Endothelial cell of umbilical vein (primary cell): ENCODE measurements at regions of chr11 and their contacts with region 1.

Region 1: DNA sequence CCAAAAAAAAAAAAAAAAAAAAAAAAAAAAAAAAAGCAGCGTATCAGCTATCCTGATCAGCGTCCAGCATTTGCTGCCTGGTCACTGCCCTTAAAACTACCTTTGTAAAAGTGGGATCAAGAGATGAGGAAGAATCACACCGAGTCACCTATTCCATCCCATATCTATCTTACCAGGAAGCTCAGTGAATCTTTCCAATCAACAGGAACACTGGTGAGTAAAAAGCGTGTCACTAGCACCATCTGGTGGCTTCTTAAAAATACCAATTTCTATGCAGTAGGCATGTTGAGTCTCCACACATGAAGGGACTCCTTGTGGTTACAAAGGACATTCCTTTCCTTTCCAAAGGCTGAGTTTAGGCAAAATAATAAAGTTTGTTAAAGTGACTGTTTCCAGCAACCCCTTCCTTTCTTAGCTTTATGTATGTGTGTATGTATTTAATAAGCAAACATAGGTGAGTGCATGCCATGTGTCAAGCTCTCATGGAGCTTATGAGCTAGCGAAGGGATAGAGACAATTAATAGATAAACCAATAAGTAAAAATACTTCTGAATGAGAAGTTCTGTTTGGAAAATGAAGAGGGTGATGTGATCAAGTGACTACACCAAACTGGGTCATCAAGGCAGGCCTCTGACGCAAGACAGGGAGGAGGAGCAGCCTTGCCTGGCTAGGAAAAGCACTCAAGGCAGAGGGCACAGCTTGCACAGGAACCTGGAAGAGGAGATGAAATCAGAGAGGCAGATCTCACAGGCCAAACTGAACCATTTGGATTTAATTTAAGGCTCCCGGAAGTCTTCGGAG is 13.9 kb upstream of the TP53AIP1 start:
- DNase-seq: peak; percentile 77
- H3K4me3 ChIP-seq: no peak overlapping the region
- H3K27ac ChIP-seq: no peak overlapping the region
- H3K4me1 ChIP-seq: no peaks in the 10 kb centered on the region
- H3K27me3 ChIP-seq: peaks cover 10 to 23% of the 10 kb centered on the region in 2 experiments
- CTCF ChIP-seq: peak; percentile 55 to 61
- POLR2A ChIP-seq: no peak

Region 2: GRCh38 chr11:128172046-128172878 is 784.3 kb before region 1 on chr11:
- CTCF ChIA-PET with region 1: interaction called, 22 read pairs
- POLR2A ChIA-PET with region 1: no interaction called
- dilution Hi-C with region 1: no loop called
- intact Hi-C with region 1: loop called (anchors 5 kb)
- DNase-seq: peak; percentile 91
- H3K4me3 ChIP-seq: no peak overlapping the region
- H3K27ac ChIP-seq: peak overlapping the region; percentile 42
- H3K4me1 ChIP-seq: peaks cover 9% of the 10 kb centered on the region
- H3K27me3 ChIP-seq: no peaks in the 10 kb centered on the region
- CTCF ChIP-seq: peak; percentile 64 to 74
- POLR2A ChIP-seq: no peak

Region 3: DNA sequence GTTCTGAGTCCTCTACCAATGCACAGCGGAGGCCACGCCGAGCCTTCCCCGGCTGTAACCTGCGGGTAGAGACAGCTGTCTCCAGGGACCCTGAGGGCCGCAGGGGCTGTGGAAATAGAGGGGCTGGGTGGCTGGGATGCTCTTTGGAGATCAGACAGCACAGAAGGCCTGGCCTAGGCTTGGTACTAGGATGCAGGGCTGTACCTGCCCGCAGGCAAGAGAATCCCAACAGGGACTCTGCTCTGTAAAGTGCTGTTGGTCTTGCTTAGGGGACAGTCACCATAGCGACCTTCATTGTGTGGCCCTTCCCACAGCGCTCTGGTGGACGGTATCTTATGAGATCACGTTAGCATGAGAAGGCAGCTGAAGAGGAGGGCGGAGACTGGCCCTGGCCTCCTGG is 76.8 kb before region 1 on chr11:
- CTCF ChIA-PET with region 1: interaction called, 951 read pairs
- POLR2A ChIA-PET with region 1: interaction called, 5 read pairs
- dilution Hi-C with region 1: no loop called
- intact Hi-C with region 1: loop called (anchors 1 kb)
- DNase-seq: no peak
- H3K4me3 ChIP-seq: no peak overlapping the region
- H3K27ac ChIP-seq: no peak overlapping the region
- H3K4me1 ChIP-seq: no peaks in the 10 kb centered on the region
- H3K27me3 ChIP-seq: peaks cover 21 to 43% of the 10 kb centered on the region in 2 experiments
- CTCF ChIP-seq: no peak
- POLR2A ChIP-seq: no peak

Region 4: GRCh38 chr11:128928400-128928799 is 28.2 kb before region 1 on chr11:
- CTCF ChIA-PET with region 1: interaction called, 10 read pairs
- POLR2A ChIA-PET with region 1: no interaction called
- dilution Hi-C with region 1: no loop called
- intact Hi-C with region 1: no loop called
- DNase-seq: no peak
- H3K4me3 ChIP-seq: no peak overlapping the region
- H3K27ac ChIP-seq: no peak overlapping the region
- H3K4me1 ChIP-seq: no peaks in the 10 kb centered on the region
- H3K27me3 ChIP-seq: peaks cover 2% of the 10 kb centered on the region in 2 experiments
- CTCF ChIP-seq: no peak
- POLR2A ChIP-seq: no peak

Region 5: GRCh38 chr11:129117595-129118350 is 161.2 kb after region 1 on chr11:
- CTCF ChIA-PET with region 1: no interaction called
- POLR2A ChIA-PET with region 1: no interaction called
- dilution Hi-C with region 1: no loop called
- intact Hi-C with region 1: loop called (anchors 5 kb)
- DNase-seq: peak; percentile 77
- H3K4me3 ChIP-seq: no peak overlapping the region
- H3K27ac ChIP-seq: no peak overlapping the region
- H3K4me1 ChIP-seq: no peaks in the 10 kb centered on the region
- H3K27me3 ChIP-seq: no peaks in the 10 kb centered on the region
- CTCF ChIP-seq: peak; percentile 65 to 83
- POLR2A ChIP-seq: no peak